Activated CD4-positive, alpha-beta T cell treated with anti-CD3 and anti-CD28 coated beads, Interleukin-2, amount 10 ng/mL, durations not matched to agents 24 days and 14 days (primary cell): ENCODE measurements at regions of chr4 and their contacts with region 1.

Region 1: DNA sequence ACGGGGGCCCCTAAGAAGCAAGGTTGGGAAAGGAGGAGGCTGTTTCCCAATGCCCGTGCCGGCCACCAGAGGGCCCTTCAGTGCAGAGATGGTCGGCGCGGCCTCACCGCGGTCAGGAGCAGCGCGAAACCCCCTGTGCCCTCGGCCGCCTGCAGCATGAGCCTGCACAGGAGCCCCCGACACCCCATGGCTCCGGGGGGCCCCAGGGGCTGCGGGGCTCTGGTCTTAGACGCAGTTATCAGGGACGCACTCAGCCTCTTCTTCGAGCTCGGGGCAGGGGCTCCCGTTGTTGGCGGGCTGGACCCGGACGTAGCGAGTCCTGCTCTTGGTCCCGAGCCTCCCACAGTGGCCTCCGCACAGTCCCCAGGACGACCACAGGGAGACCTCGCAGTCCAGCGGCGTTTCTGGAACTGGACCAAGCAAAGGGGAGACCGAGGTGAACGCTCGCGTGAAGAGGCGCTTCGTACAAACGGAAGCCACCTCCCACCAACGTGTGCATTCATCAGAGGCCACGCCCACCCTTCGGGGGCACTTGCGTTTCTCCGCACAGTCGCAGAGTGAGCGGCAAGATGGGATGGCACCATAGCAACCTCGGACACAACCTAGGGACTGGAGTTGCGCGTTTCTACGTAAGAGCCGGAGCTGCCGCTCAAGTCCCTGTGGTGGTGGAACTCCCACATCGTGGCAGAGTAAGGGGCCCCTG is 5.0 kb downstream of the SPON2 start:
- DNase-seq: peak; percentile 96
- H3K4me3 Mint-ChIP-seq: peak overlapping the region; percentile 84
- H3K27ac Mint-ChIP-seq: peak overlapping the region; percentile 39
- H3K4me1 Mint-ChIP-seq: peaks cover 26% of the 10 kb centered on the region
- H3K27me3 Mint-ChIP-seq: peaks cover 18% of the 10 kb centered on the region

Region 2: DNA sequence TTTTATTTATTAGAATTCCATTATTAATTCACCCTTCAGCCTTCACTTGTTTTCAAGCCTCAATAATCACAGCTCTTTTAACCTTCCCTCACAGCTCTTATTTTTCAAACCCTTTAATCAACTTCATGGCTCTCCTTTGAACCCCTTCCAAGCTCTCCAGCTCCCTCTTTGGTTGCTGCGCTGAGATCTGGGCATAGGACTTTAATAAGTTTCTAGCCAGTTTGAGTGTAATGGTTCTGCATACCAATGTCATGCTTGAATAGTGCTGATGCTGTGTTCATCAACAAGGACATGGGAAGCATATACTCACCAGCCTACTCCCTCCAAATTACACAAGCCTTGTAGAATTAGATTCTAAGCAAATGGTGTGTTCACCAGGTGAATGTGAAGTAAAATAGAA is 50.6 kb before region 1 on chr4:
- intact Hi-C with region 1: no loop called
- DNase-seq: peak; percentile 49
- H3K4me3 Mint-ChIP-seq: no peak overlapping the region
- H3K27ac Mint-ChIP-seq: no peak overlapping the region
- H3K4me1 Mint-ChIP-seq: peaks cover 2% of the 10 kb centered on the region
- H3K27me3 Mint-ChIP-seq: peaks cover 43% of the 10 kb centered on the region

Region 3: DNA sequence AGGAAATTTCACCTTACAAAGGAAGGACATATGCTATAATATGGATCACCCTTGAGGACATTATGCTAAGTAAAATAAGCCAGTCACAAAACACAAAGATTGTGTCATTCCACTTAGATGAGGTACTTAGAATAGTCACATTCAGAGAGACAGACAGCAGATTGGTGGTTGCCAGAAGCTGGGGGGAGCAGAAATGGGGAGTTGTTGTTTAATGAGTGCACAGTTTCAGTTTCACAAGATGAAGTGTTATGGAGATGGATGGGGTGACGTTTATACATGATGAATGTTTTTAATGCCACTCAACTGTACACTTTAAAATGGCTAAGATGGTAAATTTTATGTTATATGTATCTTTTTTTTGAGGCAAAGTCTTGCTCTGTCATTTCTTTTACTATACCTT is 19.8 kb after region 1 on chr4:
- intact Hi-C with region 1: loop called (anchors 2 kb)
- DNase-seq: peak; percentile 86
- H3K4me3 Mint-ChIP-seq: no peak overlapping the region
- H3K27ac Mint-ChIP-seq: no peak overlapping the region
- H3K4me1 Mint-ChIP-seq: peaks cover 12% of the 10 kb centered on the region
- H3K27me3 Mint-ChIP-seq: no peaks in the 10 kb centered on the region

Region 4: GRCh38 chr4:1218634-1219565 is 51.5 kb after region 1 on chr4:
- intact Hi-C with region 1: loop called (anchors 5 kb)
- DNase-seq: no peak
- H3K4me3 Mint-ChIP-seq: no peak overlapping the region
- H3K27ac Mint-ChIP-seq: peak overlapping the region; percentile 7
- H3K4me1 Mint-ChIP-seq: peaks cover 26% of the 10 kb centered on the region
- H3K27me3 Mint-ChIP-seq: no peaks in the 10 kb centered on the region

Region 5: GRCh38 chr4:1266881-1267763 is 99.7 kb after region 1 on chr4:
- intact Hi-C with region 1: loop called (anchors 1 kb)
- DNase-seq: no peak
- H3K4me3 Mint-ChIP-seq: peak overlapping the region; percentile 68
- H3K27ac Mint-ChIP-seq: peak overlapping the region; percentile 86
- H3K4me1 Mint-ChIP-seq: peaks cover 18% of the 10 kb centered on the region
- H3K27me3 Mint-ChIP-seq: no peaks in the 10 kb centered on the region

Region 6: DNA sequence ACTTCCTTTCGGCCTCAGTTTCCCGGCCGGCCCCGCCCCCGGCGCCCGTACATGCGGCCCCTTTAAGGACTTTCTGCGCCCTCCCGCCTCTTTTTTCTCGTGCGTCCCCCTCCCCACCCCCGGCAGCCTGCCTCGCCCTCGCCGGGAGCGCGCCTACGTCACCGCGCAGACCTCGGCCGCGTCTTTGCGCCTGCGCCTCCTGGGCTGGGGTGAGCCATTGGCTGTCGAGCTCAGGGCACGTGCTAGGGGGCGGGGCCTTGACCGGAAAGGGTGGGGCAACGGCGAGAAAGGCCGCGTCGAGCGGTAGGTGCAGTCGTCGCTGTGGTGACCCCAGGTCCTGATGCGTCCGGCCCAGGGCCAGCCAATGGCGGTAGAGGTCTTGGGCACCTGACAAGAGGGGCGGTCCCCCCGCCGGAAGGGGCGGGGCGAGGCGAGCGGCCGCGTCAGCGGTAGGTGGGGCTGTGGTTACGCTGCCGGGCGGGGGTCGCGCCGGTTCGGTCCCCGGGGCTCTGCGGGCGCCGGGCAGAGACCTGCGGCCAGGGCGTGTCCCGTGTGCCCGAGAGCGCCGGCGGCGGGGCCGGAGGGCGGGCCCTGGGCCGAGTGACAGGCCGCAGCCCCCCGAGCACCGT is 179.5 kb after region 1 on chr4 and contains the start of gene UVSSA:
- intact Hi-C with region 1: loop called (anchors 1 kb)
- DNase-seq: peak; percentile 100
- H3K4me3 Mint-ChIP-seq: peak within 1 kb of the TSS; percentile 98
- H3K27ac Mint-ChIP-seq: peak within 1 kb of the TSS; percentile 94
- H3K4me1 Mint-ChIP-seq: peaks cover 35% of the 10 kb centered on the region
- H3K27me3 Mint-ChIP-seq: no peaks in the 10 kb centered on the region
- total RNA-seq, gene UVSSA: 28.3 and 28.4 TPM in 2 replicates

Region 7: DNA sequence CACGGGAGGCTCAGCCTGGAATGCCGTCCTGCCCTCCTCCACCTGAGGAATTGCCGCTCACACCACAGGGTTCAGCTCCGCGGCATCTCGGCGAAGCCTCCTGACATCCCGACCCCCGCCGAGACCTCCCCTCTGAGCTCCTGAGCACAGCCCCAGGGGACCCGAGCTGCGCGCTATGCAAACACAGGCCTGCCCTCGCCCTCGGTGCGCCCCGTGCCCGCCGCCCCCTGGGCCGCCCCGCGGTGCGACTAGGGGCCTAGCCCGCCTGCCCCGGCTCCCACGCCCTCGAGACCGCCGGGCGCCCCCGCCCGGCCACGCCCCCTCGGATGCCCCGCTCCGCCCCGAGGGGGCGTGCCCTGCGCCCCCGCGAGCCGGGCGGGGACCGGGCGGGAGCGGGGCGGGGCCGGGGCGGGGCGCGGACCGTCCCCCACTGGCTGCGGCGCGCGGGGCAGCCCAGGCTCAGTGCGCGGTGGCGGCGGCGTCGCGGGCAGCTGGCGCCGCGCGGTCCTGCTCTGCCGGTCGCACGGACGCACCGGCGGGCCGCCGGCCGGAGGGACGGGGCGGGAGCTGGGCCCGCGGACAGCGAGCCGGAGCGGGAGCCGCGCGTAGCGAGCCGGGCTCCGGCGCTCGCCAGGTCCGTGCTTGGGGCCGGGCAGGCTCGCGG is 625.6 kb after region 1 on chr4 and contains the start of gene FGFR3:
- intact Hi-C with region 1: no loop called
- DNase-seq: peak; percentile 82
- H3K4me3 Mint-ChIP-seq: peak within 1 kb of the TSS; percentile 39
- H3K27ac Mint-ChIP-seq: no peak within 1 kb of the TSS
- H3K4me1 Mint-ChIP-seq: no peaks in the 10 kb centered on the region
- H3K27me3 Mint-ChIP-seq: peaks cover 24% of the 10 kb centered on the region
- total RNA-seq, gene FGFR3: 0.30 and 0.38 TPM in 2 replicates